ENCODE measurements at regions of chr11 and their contacts with region 1.

Region 1: DNA sequence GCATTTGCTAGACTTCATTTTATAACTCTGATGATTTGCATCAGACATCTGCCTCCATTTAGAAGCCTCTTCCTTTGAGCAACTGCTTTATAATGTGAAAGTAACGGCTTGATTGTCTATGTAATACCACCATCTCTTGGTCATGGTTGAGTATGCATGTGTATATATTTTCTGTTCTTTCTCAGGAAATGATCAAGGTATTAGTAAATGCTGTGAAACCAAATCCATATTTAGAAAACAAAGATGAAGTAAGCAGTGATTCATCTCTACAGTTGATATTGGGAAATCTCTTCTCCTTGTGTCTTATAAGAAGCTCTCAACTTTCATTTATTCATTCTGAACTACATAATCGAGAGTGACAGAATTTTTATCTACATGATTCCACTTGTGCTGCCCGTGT is 104.6 kb upstream of the ANO3 start:
- DNase-seq: peak; percentile 89
- H3K4me3 ChIP-seq: peak overlapping the region in 1 of 3 experiments; percentile 4
- H3K27ac ChIP-seq: peak overlapping the region; percentile 36
- H3K4me1 ChIP-seq: peaks cover 32% of the 10 kb centered on the region
- H3K27me3 ChIP-seq: no peaks in the 10 kb centered on the region
- CTCF ChIP-seq: peak; percentile 57 to 60

Region 2: GRCh38 chr11:25970726-25971508 is 256.4 kb before region 1 on chr11:
- CTCF ChIA-PET with region 1: no interaction called
- dilution Hi-C with region 1: no loop called
- in situ Hi-C with region 1: loop called in 1 of 2 experiments (anchors 5 kb)
- intact Hi-C with region 1: no loop called
- DNase-seq: peak; percentile 74
- H3K4me3 ChIP-seq: no peak overlapping the region
- H3K27ac ChIP-seq: no peak overlapping the region
- H3K4me1 ChIP-seq: peaks cover 7% of the 10 kb centered on the region
- H3K27me3 ChIP-seq: no peaks in the 10 kb centered on the region
- CTCF ChIP-seq: peak; percentile 41 to 45

Region 3: DNA sequence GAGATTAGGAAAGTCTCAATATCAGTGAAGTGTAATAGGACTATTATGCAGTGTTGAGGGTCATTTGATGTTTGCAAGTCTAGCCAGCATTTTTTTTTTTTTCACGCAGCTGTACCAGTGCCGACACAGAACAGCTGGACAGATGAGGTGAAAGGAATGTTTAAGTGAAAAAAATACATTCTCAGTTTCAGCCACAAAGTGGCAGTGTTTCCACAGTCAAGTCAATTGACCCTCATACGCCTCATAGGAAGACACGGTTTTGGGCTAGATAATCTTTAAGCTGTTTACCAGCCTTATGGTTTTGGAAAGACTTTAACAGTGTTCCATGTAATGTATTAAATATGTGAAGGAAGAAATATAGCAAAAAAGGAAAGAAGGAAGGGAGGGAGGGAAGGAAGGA is 245.3 kb before region 1 on chr11:
- CTCF ChIA-PET with region 1: interaction called, 24 read pairs
- dilution Hi-C with region 1: no loop called
- in situ Hi-C with region 1: loop called in 1 of 2 experiments (anchors 10 kb)
- intact Hi-C with region 1: loop called (anchors 1 kb)
- DNase-seq: peak; percentile 41
- H3K4me3 ChIP-seq: no peak overlapping the region
- H3K27ac ChIP-seq: no peak overlapping the region
- H3K4me1 ChIP-seq: no peaks in the 10 kb centered on the region
- H3K27me3 ChIP-seq: no peaks in the 10 kb centered on the region
- CTCF ChIP-seq: peak; percentile 59 to 61

Region 4: DNA sequence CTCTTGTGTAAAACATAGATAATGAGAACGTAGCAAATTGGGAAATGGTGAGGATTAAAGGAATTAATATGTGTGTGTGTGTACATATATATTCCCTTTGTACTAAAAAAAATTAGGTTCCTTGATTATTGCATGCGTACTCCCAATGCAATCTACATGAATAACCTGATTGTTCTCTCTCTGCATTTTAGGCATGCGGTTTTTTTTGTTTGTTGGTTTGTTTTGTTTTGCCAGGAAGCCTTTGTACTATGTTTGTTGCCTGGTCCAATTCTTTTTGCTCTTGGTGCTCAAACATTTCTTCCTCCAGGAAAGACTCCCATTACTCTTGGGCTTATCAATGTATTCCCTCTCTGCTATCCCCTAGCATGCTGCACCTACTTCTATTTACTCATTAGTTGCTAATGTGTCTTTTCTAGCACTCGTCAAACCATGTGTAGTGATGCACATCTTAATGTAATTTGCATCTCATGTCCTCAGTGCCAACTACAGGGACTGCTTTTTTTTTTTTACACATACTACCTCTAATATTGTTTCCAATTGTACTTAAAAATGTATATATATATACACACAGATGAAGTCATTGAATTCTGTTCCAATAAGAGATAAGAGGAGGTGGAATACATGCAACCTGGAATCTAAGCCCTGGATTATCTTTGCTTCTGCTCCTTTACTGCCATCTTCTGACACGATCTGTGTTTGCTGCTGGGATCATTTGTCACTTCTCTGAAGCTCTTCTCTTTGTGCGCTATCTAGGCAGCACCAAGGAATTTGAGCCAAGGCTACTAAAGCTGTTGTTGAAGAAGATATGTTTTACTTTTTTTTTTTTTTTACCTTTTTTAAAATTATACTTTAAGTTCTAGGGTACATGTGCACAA is 92.6 kb before region 1 on chr11:
- CTCF ChIA-PET with region 1: interaction called, 20 read pairs
- dilution Hi-C with region 1: no loop called
- in situ Hi-C with region 1: no loop called
- intact Hi-C with region 1: loop called (anchors 1 kb)
- DNase-seq: peak; percentile 32
- H3K4me3 ChIP-seq: no peak overlapping the region
- H3K27ac ChIP-seq: no peak overlapping the region
- H3K4me1 ChIP-seq: no peaks in the 10 kb centered on the region
- H3K27me3 ChIP-seq: no peaks in the 10 kb centered on the region
- CTCF ChIP-seq: peak; percentile 20 to 35

Region 5: DNA sequence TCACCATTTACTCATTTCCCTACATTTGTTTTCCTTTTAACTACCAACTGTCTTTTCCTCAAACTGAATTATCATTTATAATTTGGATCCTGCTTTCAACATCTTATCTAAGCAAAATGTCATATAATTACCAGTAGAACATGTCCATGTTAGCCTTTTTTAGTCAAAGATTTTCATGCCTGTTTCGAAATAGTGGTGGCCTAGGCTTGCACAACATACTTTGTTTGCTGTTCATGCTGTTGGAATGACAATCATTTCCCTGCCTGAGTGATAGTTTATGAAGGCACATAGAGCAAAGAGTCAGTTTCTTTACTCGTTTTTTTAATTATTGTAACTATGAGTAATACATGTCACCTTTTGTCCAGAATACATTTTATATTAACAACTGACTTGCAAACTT is 39.7 kb before region 1 on chr11:
- CTCF ChIA-PET with region 1: no interaction called
- dilution Hi-C with region 1: no loop called
- in situ Hi-C with region 1: no loop called
- intact Hi-C with region 1: loop called (anchors 2 kb)
- DNase-seq: peak; percentile 73
- H3K4me3 ChIP-seq: no peak overlapping the region
- H3K27ac ChIP-seq: peak overlapping the region; percentile 40
- H3K4me1 ChIP-seq: peaks cover 9% of the 10 kb centered on the region
- H3K27me3 ChIP-seq: no peaks in the 10 kb centered on the region
- CTCF ChIP-seq: no peak

Region 6: DNA sequence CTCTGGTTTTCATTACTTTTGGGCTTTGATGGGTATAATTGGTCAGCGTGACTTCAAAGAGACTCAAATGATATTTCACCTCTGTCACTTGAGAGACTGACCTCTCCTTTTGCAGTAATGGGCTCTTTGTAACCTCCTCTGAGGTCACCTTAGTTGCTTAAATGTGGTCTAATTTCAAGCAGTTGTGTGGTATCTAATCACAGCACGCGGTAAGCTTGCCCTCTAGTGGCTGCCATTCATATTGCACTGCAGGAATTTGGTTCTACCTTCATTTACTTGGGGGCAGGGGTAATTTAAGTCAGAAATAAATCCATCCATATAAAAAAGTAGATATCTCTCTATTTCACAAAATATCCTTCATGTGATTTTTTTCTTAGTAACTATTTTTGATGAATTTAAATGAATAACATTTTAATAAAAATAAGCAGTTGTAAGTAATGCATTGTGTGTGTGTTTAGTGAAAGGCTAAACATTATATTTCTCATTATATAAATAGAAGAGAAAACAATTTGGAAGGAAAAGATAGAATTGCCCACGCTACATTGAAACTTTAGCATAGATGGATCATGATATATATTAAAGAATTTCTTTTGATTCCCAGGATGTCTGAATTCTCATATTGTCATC is 49.6 kb after region 1 on chr11:
- CTCF ChIA-PET with region 1: no interaction called
- dilution Hi-C with region 1: no loop called
- in situ Hi-C with region 1: no loop called
- intact Hi-C with region 1: loop called (anchors 1 kb)
- DNase-seq: peak; percentile 35
- H3K4me3 ChIP-seq: no peak overlapping the region
- H3K27ac ChIP-seq: no peak overlapping the region
- H3K4me1 ChIP-seq: no peaks in the 10 kb centered on the region
- H3K27me3 ChIP-seq: no peaks in the 10 kb centered on the region
- CTCF ChIP-seq: peak; percentile 96 to 97

Region 7: DNA sequence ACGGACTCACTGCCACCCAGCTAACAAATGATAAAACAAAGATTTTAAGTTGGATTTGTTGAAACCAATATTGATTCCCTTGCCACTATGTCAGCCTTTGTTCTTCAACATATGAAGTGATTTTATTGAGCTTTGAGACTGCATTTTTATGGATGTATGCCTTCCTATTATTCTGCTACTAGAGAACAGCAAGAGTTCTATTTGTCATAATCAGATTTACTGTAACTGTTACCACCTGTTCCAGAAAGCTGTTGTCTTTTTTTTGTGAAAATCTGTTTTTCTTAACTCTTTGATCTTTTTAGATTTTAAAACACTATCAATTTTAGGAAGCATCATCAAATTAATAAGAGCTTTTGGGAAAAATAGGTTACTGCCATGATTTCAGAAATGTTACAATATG is 230.3 kb after region 1 on chr11:
- CTCF ChIA-PET with region 1: no interaction called
- dilution Hi-C with region 1: no loop called
- in situ Hi-C with region 1: no loop called
- intact Hi-C with region 1: no loop called
- DNase-seq: no peak
- H3K4me3 ChIP-seq: no peak overlapping the region
- H3K27ac ChIP-seq: no peak overlapping the region
- H3K4me1 ChIP-seq: no peaks in the 10 kb centered on the region
- H3K27me3 ChIP-seq: no peaks in the 10 kb centered on the region
- CTCF ChIP-seq: no peak

Measured in mammary epithelial cell (primary cell).